ENCODE measurements at regions of chr6 and their contacts with region 1.

Region 1: DNA sequence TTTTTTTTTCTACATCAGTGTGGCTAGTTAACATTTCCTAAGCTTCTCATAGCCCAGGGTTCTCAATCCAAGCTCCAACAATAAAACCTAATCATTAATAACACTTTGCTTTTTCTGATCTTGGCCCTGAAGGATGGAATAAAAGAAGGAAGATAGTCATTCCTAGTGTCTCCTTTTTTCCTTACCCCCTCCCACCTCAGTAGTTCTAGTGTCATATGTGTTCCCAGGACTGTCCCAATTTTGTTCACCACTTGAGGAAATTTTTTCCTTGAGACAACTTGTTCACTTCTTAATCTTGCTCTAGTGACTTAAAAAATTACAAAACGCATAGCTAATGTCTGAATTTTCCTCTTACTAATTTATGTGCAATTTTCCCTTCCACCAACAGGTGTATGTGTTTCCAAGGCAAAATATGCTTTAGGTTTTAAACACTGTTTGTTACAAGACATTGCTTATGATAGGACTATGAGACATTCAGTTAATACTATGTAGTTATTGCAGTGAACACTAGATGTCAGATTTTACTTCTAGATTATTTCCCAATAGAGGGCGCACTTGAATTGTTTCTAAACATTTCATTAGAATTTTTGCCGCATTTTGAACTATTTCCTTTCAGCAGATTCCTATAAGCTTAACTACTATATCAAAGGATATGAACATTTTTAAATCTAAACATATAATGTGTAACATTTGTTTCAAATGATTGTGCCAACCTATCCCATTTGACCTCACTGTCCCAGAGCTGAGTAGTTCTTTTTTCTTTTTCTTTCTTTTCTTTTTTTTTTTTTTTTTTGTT is 18.5 kb upstream of the C6orf141 start:
- DNase-seq: no peak
- ATAC-seq: peak in 3 of 4 donors; percentile 47 to 78 (median 52)
- H3K4me3 ChIP-seq: peak overlapping the region; percentile 37
- H3K27ac ChIP-seq: no peak overlapping the region
- H3K4me1 ChIP-seq: no peaks in the 10 kb centered on the region
- H3K27me3 ChIP-seq: no peaks in the 10 kb centered on the region
- CTCF ChIP-seq: peak; percentile 78

Region 2: DNA sequence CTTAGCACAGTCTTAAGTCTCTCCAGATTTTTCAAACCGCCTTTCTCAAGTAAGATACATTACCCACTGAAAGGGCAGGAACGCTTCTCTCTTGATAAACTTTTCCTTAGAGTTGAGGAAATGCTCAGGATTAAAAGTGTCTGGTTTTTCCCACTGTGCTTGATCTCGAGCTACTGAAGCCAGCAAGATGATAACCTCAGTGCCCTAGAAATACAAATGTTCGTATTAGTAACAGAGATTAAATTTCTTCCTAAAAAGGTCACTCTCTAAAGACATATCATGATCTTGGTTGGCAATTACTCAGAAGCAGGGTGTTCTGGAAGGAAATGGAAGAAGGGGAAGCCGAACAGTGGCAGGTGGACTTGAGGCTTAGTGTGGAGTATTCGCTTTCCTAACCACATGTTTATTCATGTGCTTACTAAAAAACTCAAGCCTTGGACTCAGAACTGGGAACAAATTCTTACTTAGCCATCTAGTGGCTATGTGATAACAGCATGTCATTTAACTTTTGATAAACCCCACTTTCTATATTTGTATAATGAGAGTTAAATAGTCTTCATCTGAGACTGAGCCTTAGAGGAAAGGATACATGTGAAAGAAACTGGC is 38.6 kb after region 1 on chr6:
- intact Hi-C with region 1: loop called in 1 of 2 experiments (anchors 5 kb)
- DNase-seq: no peak
- ATAC-seq: no peak
- H3K4me3 ChIP-seq: no peak overlapping the region
- H3K27ac ChIP-seq: no peak overlapping the region
- H3K4me1 ChIP-seq: no peaks in the 10 kb centered on the region
- H3K27me3 ChIP-seq: no peaks in the 10 kb centered on the region
- CTCF ChIP-seq: no peak

Region 3: GRCh38 chr6:49606696-49607390 is 74.9 kb after region 1 on chr6:
- intact Hi-C with region 1: loop called in 1 of 2 experiments (anchors 5 kb)
- DNase-seq: no peak
- ATAC-seq: peak in 2 of 4 donors; percentile 57 to 65
- H3K4me3 ChIP-seq: no peak overlapping the region
- H3K27ac ChIP-seq: no peak overlapping the region
- H3K4me1 ChIP-seq: no peaks in the 10 kb centered on the region
- H3K27me3 ChIP-seq: no peaks in the 10 kb centered on the region
- CTCF ChIP-seq: peak; percentile 70

Region 4: DNA sequence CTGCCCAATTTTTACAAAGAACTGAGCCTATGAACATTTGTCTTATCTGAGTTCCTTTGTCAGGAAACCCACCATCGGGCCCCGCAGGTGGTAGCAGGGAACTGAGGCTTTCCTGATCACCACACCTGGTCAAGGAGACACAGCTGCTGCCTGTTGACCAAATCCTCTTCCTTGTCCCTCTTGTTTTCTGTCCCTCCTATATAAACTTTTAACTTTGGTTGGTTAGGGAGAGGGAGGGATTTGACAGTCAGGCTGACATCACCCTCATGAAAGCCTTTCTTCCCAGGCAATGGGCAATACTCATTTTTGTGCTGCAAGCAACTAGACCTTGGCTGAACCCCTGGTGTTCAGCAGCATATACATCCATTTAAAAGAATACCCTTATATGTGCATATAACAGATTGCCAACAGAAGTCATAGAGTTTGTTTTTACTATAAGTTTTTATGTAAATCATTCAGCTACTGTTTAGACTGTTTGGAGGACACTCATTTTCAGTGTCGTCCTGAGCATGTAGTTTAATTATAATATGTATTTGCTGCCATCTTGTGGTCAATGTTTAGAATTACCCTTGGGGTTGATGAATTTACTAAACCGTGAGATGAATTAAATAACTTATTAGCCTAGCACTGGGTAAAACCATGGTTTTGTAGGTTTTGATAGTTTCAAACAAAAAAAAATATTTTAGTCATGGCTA is 317.4 kb after region 1 on chr6:
- intact Hi-C with region 1: loop called (anchors 5 kb)
- DNase-seq: no peak
- ATAC-seq: peak in 1 of 4 donors; percentile 68
- H3K4me3 ChIP-seq: no peak overlapping the region
- H3K27ac ChIP-seq: no peak overlapping the region
- H3K4me1 ChIP-seq: no peaks in the 10 kb centered on the region
- H3K27me3 ChIP-seq: no peaks in the 10 kb centered on the region
- CTCF ChIP-seq: peak; percentile 68

Measured in psoas muscle (tissue), 8 donors.